ENCODE measurements at regions of chr14 and their contacts with region 1.

Region 1: GRCh38 chr14:35897616-35898111 is 71.5 kb downstream of the BRMS1L start:
- DNase-seq: peak; percentile 8 to 92 (median 84)
- H3K4me3 ChIP-seq: peak overlapping the region in 57 of 59 donors; percentile 9 to 71 (median 46)
- H3K27ac ChIP-seq: peak overlapping the region; percentile 43 to 97 (median 90)
- H3K27me3 ChIP-seq: no peaks in the 10 kb centered on the region
- CTCF ChIP-seq: peak in 25 of 56 donors; percentile 4 to 50 (median 23)

Region 2: DNA sequence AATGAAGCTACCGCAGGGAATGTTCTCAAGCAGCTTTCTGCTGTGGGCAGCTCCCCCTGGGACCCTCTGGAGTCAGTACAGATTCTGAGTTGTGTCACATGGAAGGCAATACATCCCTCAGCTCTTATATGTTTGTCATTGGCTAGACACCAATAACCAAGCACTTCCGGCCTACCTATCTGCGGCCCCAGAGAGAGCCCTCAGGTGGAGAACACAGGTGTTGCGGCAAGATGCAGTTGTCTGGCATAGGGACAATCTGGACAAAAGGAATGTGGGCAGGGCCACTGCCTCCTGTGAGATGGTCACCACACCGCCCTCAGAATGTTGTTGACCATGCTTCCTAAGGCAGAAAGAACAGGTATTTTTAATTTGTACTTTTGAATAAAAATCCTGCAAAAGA is 47.2 kb after region 1 on chr14:
- intact Hi-C with region 1: loop called (anchors 5 to 10 kb)
- DNase-seq: no peak
- H3K4me3 ChIP-seq: no peak overlapping the region
- H3K27ac ChIP-seq: no peak overlapping the region
- H3K27me3 ChIP-seq: no peaks in the 10 kb centered on the region
- CTCF ChIP-seq: no peak

Region 3: GRCh38 chr14:35949985-35950384 is 52.3 kb after region 1 on chr14:
- intact Hi-C with region 1: loop called in 1 of 2 experiments (anchors 10 kb)
- DNase-seq: no peak
- H3K4me3 ChIP-seq: no peak overlapping the region
- H3K27ac ChIP-seq: peak overlapping the region in 30 of 59 donors; percentile 0 to 68 (median 40)
- H3K27me3 ChIP-seq: no peaks in the 10 kb centered on the region
- CTCF ChIP-seq: no peak

Region 4: DNA sequence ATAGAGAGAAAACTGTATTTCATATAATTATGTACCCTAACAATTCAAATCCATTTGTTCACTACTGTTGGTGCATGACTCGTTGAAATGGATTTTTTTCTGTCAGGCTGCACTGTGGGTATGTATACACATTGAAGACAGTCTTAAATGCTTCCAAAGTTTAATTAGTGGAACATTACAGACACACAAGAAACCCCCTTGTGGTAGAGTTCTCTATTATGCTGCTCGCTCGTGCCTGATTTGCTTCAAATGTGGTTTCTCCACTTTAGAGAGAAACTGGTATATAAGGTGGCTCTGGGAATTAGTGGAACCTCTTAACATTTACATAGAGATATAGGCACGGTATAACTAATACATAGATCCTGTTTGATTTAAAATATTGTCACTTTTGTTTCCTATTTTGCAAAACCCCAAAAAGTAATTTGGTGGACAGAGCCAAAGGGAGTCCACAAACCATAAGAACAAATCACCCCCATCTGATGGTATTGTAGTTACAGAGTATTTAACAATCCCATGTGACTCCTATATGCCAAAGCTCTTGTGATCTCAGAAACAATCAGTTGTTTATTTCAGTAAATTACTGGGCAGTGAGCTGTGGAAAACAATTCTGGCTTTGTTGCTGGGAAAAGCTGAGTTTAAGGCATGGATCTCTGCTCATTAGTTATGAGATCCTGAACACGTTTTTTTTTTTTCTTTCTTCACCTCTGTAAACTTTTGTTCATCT is 88.0 kb after region 1 on chr14:
- intact Hi-C with region 1: loop called in 1 of 2 experiments (anchors 5 kb)
- DNase-seq: no peak
- H3K4me3 ChIP-seq: peak overlapping the region in 5 of 59 donors; percentile 8 to 31 (median 14)
- H3K27ac ChIP-seq: peak overlapping the region; percentile 76 to 100 (median 98)
- H3K27me3 ChIP-seq: no peaks in the 10 kb centered on the region
- CTCF ChIP-seq: peak in 19 of 56 donors; percentile 5 to 48 (median 25)